ENCODE measurements at regions of chr20 and their contacts with region 1.

Region 1: DNA sequence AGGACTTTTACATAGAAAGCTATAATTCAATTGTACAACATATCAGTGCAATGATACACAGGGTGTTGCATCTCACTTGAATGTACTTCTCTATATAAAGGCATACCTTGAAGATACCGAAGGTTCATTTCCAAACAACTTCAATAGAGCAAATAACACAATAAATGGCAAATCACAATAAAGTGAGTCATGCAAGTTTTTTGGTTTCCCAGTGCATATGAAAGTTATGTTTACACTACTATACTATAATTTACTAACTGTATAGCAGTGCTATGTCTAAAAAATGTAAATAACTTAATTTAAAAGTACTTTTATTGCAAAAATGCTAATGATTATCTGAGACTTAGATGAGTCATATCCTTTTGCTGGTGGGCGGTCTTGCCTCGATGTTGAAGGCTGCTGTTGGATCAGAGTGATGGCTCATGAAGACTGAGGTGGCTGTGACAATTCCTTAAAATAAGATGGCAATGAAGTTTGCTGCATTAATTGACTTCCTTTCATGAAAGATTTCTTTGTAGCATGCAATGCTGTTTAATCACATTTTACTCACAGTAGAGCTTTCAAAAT is 188.8 kb downstream of the TASP1 start:
- DNase-seq: no peak
- ATAC-seq: no peak
- H3K4me3 ChIP-seq: no peak overlapping the region
- H3K27ac ChIP-seq: no peak overlapping the region
- H3K4me1 ChIP-seq: no peaks in the 10 kb centered on the region
- H3K27me3 ChIP-seq: no peaks in the 10 kb centered on the region
- CTCF ChIP-seq: no peak
- POLR2A ChIP-seq: no peak

Region 2: DNA sequence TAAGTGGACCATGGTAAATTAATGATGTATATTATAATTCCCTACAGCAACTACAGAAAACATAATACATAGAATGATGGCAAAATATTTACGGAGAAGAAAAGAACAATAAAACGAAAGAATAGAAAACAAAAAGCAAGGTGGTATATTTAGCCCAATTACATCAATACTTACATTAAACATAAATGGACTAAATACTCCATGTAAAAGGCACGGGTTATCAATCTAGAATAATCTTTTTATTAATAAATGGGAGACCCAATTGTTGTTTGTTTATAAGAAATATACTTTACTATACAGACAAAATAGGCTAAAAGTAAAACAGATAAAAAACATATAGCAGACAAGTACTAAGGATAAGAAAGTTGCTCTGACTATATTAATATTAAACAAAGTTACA is 51.5 kb after region 1 on chr20:
- intact Hi-C with region 1: loop called in 1 of 10 experiments (anchors 10 kb)
- DNase-seq: no peak
- ATAC-seq: no peak
- H3K4me3 ChIP-seq: no peak overlapping the region
- H3K27ac ChIP-seq: no peak overlapping the region
- H3K4me1 ChIP-seq: no peaks in the 10 kb centered on the region
- H3K27me3 ChIP-seq: no peaks in the 10 kb centered on the region
- CTCF ChIP-seq: no peak
- POLR2A ChIP-seq: no peak

Measured in heart left ventricle (tissue), 16 donors.